Activated naive CD4-positive, alpha-beta T cell treated with anti-CD3 and anti-CD28 coated beads, Interleukin-2, amount 10 ng/mL, durations not matched to agents 7 days and 5 days (primary cell): ENCODE measurements at regions of chr1 and their contacts with region 1.

Region 1: DNA sequence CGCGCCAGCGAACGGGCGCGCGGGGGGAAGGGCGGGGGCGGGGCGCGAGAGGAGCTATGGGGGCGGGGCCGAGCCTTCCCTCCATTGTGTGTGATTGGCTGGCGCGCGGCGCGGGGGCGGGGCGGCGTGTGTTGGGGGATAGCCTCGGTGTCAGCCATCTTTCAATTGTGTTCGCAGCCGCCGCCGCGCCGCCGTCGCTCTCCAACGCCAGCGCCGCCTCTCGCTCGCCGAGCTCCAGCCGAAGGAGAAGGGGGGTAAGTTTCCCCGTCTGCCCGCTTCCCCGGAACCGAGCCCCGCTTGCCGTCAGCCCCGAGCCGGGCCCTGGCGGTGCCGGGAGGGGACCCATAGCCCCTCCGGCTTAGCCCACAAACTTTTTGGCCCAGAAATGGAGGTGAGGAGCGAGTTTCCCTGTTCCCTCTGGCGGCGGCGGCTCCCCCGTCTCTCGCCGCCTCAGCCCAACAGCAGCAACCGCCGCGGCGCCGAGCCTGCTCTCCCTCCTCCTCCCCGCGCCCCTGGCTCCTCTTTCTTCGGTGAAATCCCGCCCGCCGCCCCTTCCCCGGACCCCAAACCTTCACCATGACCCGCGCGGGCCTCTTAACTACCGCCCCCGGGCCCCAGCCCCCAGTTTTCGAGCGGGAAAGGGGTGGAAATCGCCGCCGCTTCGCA is at the start of gene H3-3A:
- DNase-seq: peak; percentile 98
- H3K4me3 Mint-ChIP-seq: peak within 1 kb of the TSS; percentile 100
- H3K27ac Mint-ChIP-seq: peak within 1 kb of the TSS; percentile 100
- H3K4me1 Mint-ChIP-seq: peaks cover 41% of the 10 kb centered on the region
- H3K27me3 Mint-ChIP-seq: no peaks in the 10 kb centered on the region

Region 2: DNA sequence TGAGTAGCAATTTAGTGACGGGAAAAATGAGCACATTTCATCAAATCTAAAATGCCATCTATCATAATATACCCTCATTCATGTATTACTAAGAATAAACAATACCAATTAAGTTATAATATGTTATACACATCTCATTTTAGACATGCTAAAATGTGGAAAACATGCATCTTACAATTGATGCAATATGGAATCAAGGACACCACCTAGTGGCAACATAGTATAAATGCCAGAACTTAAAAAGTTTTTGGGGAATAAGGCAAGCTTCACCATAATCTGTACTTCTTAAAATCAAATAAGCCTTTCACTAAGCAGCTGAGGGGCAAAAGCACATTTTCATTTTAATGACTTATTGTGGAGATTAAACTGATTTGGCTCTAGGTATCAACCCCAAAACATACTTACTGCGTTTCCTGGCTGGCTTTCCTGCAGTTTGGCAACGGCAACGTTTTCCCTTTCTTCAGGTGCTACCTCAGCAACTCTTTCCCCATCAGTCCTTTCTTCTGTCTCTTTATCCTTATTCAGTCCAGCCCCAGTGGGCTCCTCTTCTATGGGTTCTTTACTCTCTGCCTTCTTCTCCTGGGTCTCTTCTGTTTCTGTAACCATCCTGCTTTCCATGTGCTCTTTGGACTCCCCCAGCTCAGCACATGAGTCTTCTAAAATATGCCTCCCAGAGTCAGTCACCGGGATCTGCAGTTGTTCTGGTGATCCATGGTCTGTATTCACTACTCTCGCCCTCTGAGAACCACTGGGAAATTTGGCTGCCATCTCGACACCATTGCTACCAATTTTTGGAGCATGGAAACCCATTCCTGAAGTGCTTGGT is 75.0 kb before region 1 on chr1:
- CTCF ChIA-PET with region 1: interaction called, 21 read pairs
- DNase-seq: no peak
- H3K4me3 Mint-ChIP-seq: no peak overlapping the region
- H3K27ac Mint-ChIP-seq: no peak overlapping the region
- H3K4me1 Mint-ChIP-seq: peaks cover 22% of the 10 kb centered on the region
- H3K27me3 Mint-ChIP-seq: no peaks in the 10 kb centered on the region

Region 3: DNA sequence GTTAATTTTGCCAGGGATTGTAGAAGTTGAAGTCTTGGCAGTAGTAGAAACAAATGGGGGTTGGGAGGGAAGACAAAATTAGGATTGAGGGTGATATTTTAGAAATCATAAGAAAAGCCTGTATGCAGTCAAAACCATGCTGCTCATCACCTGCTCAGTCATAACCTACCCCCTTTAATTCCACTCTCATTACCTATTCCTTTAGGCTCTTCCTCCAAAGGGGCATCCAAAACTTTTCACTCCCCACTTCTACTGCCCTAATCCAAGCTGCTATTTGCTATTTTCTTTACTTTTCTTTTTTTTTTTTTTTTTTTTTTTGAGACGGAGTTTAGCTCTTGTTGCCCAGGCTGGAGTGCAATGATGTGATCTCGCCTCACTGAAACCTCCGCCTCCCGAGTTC is 11.4 kb after region 1 on chr1:
- CTCF ChIA-PET with region 1: interaction called, 17 read pairs
- DNase-seq: no peak
- H3K4me3 Mint-ChIP-seq: no peak overlapping the region
- H3K27ac Mint-ChIP-seq: no peak overlapping the region
- H3K4me1 Mint-ChIP-seq: peaks cover 11% of the 10 kb centered on the region
- H3K27me3 Mint-ChIP-seq: no peaks in the 10 kb centered on the region

Region 4: DNA sequence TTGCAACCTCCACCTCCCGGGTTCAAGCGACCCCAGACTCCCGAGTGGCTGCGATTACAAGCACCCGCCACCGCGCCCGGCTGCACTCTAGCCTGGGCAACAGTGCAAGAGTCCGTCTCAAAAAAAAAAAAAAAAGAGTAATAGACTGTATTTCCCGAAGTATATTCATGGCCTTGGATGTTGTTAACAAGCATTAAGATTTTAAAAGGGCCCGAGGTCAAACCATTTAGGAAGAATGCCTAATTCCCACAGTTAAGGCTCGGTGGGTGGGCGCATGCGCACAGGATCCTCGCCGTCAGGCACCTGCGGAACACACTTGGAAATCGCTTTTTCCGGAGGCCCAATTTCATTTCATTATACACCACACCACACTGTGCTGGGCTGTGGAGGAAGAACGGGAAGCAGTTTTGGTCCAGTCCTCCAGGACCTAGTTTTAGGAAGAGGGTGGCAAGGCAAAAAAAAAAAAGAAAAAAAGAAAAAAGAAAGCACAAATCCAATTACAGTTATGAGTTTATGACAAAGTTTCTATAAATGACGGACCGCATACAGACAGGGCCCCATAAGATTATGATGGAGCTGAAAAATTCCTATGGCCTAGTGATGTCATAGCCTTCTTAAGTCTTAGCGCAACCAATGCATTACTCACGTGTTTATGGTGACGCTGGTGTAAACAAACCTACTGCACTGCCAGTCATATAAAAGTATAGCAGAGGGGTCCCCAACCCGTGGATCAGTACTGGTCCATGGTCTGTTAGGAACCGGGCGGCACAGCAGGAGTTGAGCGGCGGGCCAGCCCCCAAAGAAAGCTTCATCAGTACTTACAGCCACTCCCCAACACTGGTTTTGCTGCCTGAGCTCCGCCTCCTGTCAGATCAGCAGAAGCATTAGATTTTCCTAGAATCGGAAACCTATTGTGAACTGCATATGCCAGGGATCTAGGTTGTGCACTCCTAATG is 38.0 kb after region 1 on chr1:
- CTCF ChIA-PET with region 1: interaction called, 13 read pairs
- DNase-seq: peak; percentile 56
- H3K4me3 Mint-ChIP-seq: peak overlapping the region; percentile 72
- H3K27ac Mint-ChIP-seq: peak overlapping the region; percentile 60
- H3K4me1 Mint-ChIP-seq: peaks cover 19% of the 10 kb centered on the region
- H3K27me3 Mint-ChIP-seq: peaks cover 54% of the 10 kb centered on the region

Region 5: GRCh38 chr1:226116673-226117072 is 54.0 kb after region 1 on chr1:
- CTCF ChIA-PET with region 1: interaction called, 33 read pairs
- DNase-seq: no peak
- H3K4me3 Mint-ChIP-seq: no peak overlapping the region
- H3K27ac Mint-ChIP-seq: no peak overlapping the region
- H3K4me1 Mint-ChIP-seq: peaks cover 18% of the 10 kb centered on the region
- H3K27me3 Mint-ChIP-seq: peaks cover 46% of the 10 kb centered on the region